AG04450 (cell line): ENCODE measurements at regions of chr4 and their contacts with region 1.

Region 1: GRCh38 chr4:150242820-150243458 is 164.7 kb downstream of the DCLK2 start:
- DNase-seq: no peak
- H3K4me3 ChIP-seq: no peak overlapping the region
- H3K27ac ChIP-seq: no peak overlapping the region
- H3K27me3 ChIP-seq: no peaks in the 10 kb centered on the region
- CTCF ChIP-seq: peak; percentile 90

Region 2: DNA sequence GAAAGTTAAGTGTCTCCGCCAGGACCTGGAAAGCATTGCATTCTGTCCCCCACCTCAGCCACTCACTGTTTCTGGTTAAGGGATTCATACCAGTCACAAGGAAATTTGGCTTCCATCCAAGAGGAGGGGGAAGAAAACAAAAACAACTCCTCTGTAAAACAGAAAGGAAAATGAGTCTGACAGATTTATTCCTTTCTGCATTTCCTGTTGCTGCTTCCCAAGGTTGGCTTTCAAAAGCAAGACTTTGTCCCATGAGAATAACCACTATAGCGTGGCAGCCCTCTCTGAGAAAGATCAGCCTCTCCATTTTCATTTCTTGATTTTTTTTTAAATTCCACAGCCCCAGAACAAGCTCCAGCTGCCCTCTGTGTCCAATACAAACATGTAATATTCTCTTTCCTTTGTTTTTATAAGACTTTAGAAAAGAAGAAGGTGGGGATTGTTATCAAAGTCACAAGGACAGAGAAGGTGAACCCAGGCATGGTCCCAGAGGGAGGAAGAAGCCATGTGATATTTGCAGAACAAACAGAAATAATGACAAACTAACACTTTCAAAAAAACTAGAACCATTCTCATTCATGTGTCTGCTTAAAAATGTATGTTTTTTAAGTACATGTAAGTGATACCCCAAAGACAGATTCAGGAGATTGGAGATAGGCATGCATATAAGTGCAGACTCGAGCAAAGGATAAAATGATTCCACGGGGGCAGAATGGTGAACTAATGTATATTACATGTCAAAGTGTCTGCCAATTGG is 255.4 kb before region 1 on chr4:
- CTCF ChIA-PET with region 1: interaction called, 13 read pairs
- POLR2A ChIA-PET with region 1: no interaction called
- DNase-seq: no peak
- H3K4me3 ChIP-seq: no peak overlapping the region
- H3K27ac ChIP-seq: no peak overlapping the region
- H3K27me3 ChIP-seq: no peaks in the 10 kb centered on the region
- CTCF ChIP-seq: no peak

Region 3: GRCh38 chr4:150010525-150011126 is 232.3 kb before region 1 on chr4:
- CTCF ChIA-PET with region 1: interaction called, 39 read pairs
- POLR2A ChIA-PET with region 1: no interaction called
- DNase-seq: peak; percentile 36
- H3K4me3 ChIP-seq: no peak overlapping the region
- H3K27ac ChIP-seq: no peak overlapping the region
- H3K27me3 ChIP-seq: no peaks in the 10 kb centered on the region
- CTCF ChIP-seq: peak; percentile 66

Region 4: GRCh38 chr4:150217192-150217591 is 25.7 kb before region 1 on chr4:
- CTCF ChIA-PET with region 1: interaction called, 19 read pairs
- POLR2A ChIA-PET with region 1: no interaction called
- DNase-seq: no peak
- H3K4me3 ChIP-seq: no peak overlapping the region
- H3K27ac ChIP-seq: no peak overlapping the region
- H3K27me3 ChIP-seq: no peaks in the 10 kb centered on the region
- CTCF ChIP-seq: peak; percentile 54

Region 5: GRCh38 chr4:150280081-150280895 is 37.3 kb after region 1 on chr4:
- CTCF ChIA-PET with region 1: interaction called, 19 read pairs
- POLR2A ChIA-PET with region 1: no interaction called
- DNase-seq: peak; percentile 63
- H3K4me3 ChIP-seq: no peak overlapping the region
- H3K27ac ChIP-seq: peak overlapping the region; percentile 91
- H3K27me3 ChIP-seq: no peaks in the 10 kb centered on the region
- CTCF ChIP-seq: no peak